ENCODE measurements at regions of chr2 and their contacts with region 1.

Region 1: GRCh38 chr2:152335010-152335725 is at the start of gene FMNL2:
- DNase-seq: peak; percentile 59
- ATAC-seq: peak; percentile 89
- H3K4me3 ChIP-seq: peak within 1 kb of the TSS; percentile 63 to 81
- H3K27ac ChIP-seq: peak within 1 kb of the TSS; percentile 67
- H3K4me1 ChIP-seq: peaks cover 0 to 17% of the 10 kb centered on the region in 2 experiments; a peak in 2 of 4 replicates
- H3K27me3 ChIP-seq: no peaks in the 10 kb centered on the region
- CTCF ChIP-seq: no peak; a peak in 1 of 6 replicates
- POLR2A ChIP-seq: peak; percentile 85
- RAD21 ChIP-seq: no peak
- total RNA-seq, gene FMNL2: 28.1 TPM

Region 2: DNA sequence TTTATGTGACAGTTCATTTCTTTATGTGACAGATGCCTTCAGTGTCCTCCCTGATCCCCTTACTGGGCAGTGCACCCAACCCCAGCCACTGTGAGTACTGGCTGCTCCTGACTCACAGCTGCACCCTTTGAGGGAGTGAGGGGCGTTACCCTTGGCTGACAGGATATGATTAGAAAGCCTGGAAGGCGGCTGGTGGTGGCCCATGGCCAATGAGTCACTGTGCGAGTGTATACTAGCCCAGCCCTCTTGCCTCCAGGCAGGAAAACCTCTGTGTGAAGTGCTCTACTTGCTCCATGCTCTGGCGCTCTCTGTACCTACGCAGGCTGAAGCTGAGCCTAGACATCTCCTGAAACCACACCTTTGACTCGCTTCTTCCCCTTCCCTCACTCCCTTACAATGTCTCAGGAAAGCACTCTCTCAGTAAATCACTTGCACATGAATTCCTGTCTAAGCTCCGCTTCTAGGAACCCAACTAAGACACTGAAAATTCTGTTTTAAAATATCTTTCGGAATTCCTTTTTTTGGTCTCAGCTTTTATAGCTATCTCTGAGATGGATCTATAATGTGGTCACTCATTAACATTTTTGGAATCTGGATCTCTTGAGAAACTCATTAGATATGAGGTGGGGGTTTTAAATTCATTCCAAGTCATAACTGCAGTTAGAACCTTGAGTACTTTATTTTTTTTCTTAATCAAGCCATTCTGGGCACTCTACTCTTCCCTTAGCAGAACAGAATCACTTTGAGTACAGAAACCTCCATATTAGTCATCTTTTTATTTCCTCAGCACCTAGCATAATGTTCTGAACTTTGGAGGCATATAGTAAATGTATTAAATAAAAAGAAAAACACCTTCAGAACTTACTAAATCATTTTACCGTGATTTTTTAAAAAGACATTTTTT is 134.4 kb before region 1 on chr2:
- CTCF ChIA-PET with region 1: no interaction called
- POLR2A ChIA-PET with region 1: no interaction called
- RAD21 ChIA-PET with region 1: no interaction called
- intact Hi-C with region 1: loop called (anchors 5 kb)
- DNase-seq: peak; percentile 96
- ATAC-seq: peak; percentile 98
- H3K4me3 ChIP-seq: peak overlapping the region; percentile 16 to 49
- H3K27ac ChIP-seq: peak overlapping the region; percentile 51; the same call in 1 of the 2 replicates
- H3K4me1 ChIP-seq: peaks cover 12 to 27% of the 10 kb centered on the region in 2 experiments; a peak in 3 of 4 replicates
- H3K27me3 ChIP-seq: no peaks in the 10 kb centered on the region
- CTCF ChIP-seq: no peak
- POLR2A ChIP-seq: peak; percentile 9
- RAD21 ChIP-seq: peak; percentile 47

Region 3: DNA sequence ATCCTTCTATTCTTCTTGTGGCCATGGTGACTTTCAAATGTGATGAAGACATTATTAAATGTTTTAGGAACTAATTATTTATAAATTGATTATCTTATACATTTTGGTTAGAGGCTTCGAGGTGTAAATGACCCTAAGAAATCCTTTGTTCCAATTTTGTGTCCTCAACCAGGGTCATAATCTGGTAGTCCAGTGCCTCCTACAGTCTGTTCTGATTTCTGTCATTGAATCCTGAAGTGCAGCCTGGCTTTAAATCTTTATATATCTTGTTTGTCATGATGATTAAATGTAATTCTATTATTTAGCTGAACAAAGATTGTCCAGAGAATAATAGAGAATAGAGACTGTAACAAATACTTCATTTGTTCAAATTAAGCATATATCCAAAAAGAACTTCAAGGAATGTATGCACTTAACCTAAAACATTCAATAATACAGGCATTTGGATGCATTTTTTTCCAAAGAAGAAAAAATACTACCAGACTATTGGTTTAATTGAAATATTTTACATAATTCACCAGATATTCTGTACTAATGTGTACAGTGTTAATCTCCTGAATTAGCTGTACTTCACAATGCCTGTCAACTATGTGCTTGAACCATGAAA is 292.3 kb after region 1 on chr2:
- CTCF ChIA-PET with region 1: no interaction called
- POLR2A ChIA-PET with region 1: no interaction called
- RAD21 ChIA-PET with region 1: no interaction called
- intact Hi-C with region 1: loop called (anchors 10 kb)
- DNase-seq: peak; percentile 18
- ATAC-seq: 0 out of 2 replicates have a peak, but pooled peaks have one; percentile 54
- H3K4me3 ChIP-seq: no peak overlapping the region
- H3K27ac ChIP-seq: no peak overlapping the region
- H3K4me1 ChIP-seq: no peaks in the 10 kb centered on the region
- H3K27me3 ChIP-seq: no peaks in the 10 kb centered on the region
- CTCF ChIP-seq: peak; percentile 53 to 65 (median 59); a peak in 5 of 6 replicates
- POLR2A ChIP-seq: no peak
- RAD21 ChIP-seq: peak; percentile 83

Measured in HCT116 (cell line).